ENCODE measurements at regions of chr7 and their contacts with region 1.

Region 1: DNA sequence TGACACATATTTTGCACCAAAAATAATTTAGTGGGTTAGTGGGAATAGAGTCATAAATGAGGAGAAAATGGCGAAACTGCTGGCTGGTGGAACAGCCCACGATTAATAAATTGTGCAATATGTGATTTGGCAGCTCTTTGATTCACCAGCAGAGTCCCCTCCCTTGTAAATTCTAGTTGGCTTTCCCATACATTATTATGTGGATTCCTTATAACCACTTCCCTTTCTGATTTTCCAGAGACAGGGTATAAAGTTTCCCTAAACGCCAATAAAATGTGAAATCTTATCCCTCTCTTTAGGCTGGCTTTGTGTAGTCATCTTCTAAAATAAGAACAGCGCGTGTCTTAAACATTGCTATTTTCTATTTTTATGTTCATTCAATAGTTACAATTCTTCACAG is 149.4 kb upstream of the FERD3L start:
- DNase-seq: peak; percentile 23

Region 2: DNA sequence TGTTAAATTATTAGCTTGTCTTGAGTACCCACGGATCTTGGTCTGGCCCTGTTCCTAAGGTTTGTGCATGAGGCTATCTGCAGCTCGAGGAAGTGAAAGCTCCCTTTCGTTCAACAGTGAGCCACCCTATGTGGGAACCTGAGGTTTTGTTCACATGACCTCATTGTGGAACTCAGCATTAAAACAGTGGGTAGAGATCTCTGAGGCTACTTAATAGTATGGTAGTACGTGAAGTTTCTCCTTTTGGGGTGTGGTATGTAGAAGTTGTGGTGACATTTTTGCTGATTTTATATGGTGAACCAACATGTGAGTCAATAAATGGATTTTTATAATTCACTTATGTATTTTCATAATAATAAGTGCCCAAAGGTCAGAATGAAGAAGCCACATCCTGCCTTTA is 103.3 kb after region 1 on chr7:
- in situ Hi-C with region 1: loop called (anchors 25 kb)
- DNase-seq: peak; percentile 87